Right cardiac atrium (tissue), 5 donors: ENCODE measurements at regions of chr18 and their contacts with region 1.

Region 1: DNA sequence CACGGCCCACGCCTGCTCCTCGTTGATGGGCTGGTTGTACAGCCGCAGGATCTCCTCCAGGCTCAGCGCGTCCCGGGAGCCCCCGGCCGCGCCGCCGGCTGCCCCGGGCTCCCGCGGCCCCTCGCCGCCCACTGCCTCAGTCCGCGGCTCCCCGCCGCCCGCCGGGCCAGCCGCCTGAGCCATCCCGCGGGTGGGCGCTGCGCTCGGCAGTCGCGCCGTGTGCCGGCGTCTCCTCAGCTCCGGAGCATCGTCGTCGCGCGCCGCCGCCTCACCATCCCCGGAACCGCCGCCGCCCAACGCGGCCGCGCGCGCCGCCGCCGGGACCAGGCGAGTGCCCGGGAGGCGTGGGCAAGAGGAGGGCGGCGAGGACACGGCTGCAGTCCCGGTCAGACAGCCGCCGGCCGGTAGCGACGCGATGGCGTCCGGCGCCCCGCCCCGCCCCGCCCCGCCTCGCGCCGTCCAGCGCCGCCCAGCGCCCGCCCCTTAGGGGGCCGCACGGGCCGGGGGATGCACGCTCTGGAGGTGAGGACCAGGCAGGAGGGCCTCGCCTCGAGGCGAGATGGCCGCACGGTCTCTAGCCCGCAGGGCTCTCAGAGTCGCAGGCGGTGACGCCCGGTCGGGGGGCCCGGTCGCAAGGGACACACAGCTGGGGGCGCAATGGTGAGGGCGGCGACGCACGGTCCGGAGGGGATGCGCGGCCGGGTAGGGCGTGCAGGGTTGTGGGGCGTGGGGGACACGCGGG is at the start of gene SPIRE1:
- DNase-seq: peak; percentile 81 to 93 (median 93)
- ATAC-seq: peak; percentile 91 to 94
- H3K4me3 ChIP-seq: peak within 1 kb of the TSS; percentile 70
- H3K27ac ChIP-seq: peak within 1 kb of the TSS; percentile 78
- H3K4me1 ChIP-seq: no peaks in the 10 kb centered on the region
- H3K27me3 ChIP-seq: no peaks in the 10 kb centered on the region
- total RNA-seq, gene SPIRE1: 34.3 to 41.9 (median 38.2) TPM

Region 2: GRCh38 chr18:12391618-12392165 is 266.2 kb before region 1 on chr18:
- intact Hi-C with region 1: loop called in 3 of 4 experiments (anchors 2 to 5 kb)
- DNase-seq: peak in 2 of 3 donors; percentile 38 to 80
- ATAC-seq: peak; percentile 93
- H3K4me3 ChIP-seq: no peak overlapping the region
- H3K27ac ChIP-seq: no peak overlapping the region
- H3K4me1 ChIP-seq: no peaks in the 10 kb centered on the region
- H3K27me3 ChIP-seq: no peaks in the 10 kb centered on the region

Region 3: DNA sequence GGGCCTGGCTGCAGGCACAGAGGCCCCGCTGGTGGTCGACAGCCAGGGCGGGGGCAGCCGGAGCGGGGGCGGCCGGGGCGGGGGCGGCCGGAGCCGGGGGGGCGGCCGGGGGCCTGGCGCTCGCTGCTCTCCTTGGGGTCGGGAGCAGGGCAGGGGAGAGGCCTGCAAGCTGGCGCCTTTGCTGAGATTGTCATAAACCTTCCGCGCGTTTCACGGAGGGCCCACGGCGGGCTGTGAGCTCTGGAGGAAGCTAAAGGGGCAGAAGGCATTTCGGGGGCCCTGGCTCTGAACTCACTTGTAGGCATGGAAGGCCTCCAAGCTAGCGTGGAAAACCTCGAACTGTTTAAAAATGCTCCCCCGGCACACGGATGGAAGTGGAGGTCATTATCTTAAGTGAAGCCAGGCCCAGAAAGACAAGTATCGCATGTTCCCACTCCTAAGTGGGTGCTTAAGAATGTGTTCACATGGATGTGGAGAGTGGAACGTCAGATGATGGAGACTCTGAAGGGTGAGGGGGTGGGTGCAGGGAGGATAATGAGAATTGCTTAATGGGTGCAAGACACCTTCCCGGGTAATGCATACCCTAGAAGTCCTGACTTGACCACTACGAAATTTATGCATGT is 249.5 kb before region 1 on chr18:
- intact Hi-C with region 1: loop called in 1 of 4 experiments (anchors 5 kb)
- DNase-seq: no peak
- ATAC-seq: no peak
- H3K4me3 ChIP-seq: peak overlapping the region; percentile 76
- H3K27ac ChIP-seq: peak overlapping the region; percentile 77
- H3K4me1 ChIP-seq: no peaks in the 10 kb centered on the region
- H3K27me3 ChIP-seq: no peaks in the 10 kb centered on the region

Region 4: DNA sequence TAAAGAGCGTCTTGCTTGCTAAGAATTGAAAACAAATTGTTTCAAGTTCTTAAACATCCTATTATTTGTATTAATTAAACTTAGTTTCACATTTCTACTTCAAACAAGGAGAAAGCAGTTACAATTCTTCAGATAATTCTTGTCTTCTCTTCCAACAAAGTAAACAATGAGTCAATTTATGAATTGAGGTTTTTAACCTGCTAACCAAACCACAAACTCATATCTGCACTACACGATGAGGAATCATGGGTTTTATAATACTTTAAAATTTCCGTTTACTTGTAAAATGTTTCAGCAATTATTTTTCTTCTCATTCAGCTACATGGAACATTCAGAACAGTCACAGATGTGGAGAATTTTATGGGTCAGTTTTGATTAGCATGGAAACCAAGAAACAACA is 114.2 kb before region 1 on chr18:
- intact Hi-C with region 1: loop called in 2 of 4 experiments (anchors 10 kb)
- DNase-seq: no peak
- ATAC-seq: no peak
- H3K4me3 ChIP-seq: no peak overlapping the region
- H3K27ac ChIP-seq: no peak overlapping the region
- H3K4me1 ChIP-seq: no peaks in the 10 kb centered on the region
- H3K27me3 ChIP-seq: no peaks in the 10 kb centered on the region

Region 5: GRCh38 chr18:12702221-12703095 is 44.6 kb after region 1 on chr18 and contains the starts of genes CEP76 and PSMG2:
- intact Hi-C with region 1: no loop called
- DNase-seq: peak; percentile 96 to 98 (median 98)
- ATAC-seq: peak; percentile 97
- H3K4me3 ChIP-seq: peak within 1 kb of the TSS; percentile 49
- H3K27ac ChIP-seq: peak within 1 kb of the TSS; percentile 87
- H3K4me1 ChIP-seq: peaks cover 2% of the 10 kb centered on the region
- H3K27me3 ChIP-seq: no peaks in the 10 kb centered on the region
- total RNA-seq, gene CEP76: 3.2 to 4.2 (median 3.9) TPM
- total RNA-seq, gene PSMG2: 44.4 to 48.3 (median 45.5) TPM